MCF 10A (cell line): ENCODE measurements at regions of chr12 and their contacts with region 1.

Region 1: GRCh38 chr12:4037747-4038312 is 164.6 kb upstream of the PARP11 start:
- DNase-seq: peak; percentile 69
- H3K4me3 Mint-ChIP-seq: no peak overlapping the region
- H3K27ac Mint-ChIP-seq: no peak overlapping the region
- H3K4me1 Mint-ChIP-seq: peaks cover 22% of the 10 kb centered on the region
- H3K27me3 Mint-ChIP-seq: peaks cover 4% of the 10 kb centered on the region
- CTCF ChIP-seq: peak; percentile 71

Region 2: DNA sequence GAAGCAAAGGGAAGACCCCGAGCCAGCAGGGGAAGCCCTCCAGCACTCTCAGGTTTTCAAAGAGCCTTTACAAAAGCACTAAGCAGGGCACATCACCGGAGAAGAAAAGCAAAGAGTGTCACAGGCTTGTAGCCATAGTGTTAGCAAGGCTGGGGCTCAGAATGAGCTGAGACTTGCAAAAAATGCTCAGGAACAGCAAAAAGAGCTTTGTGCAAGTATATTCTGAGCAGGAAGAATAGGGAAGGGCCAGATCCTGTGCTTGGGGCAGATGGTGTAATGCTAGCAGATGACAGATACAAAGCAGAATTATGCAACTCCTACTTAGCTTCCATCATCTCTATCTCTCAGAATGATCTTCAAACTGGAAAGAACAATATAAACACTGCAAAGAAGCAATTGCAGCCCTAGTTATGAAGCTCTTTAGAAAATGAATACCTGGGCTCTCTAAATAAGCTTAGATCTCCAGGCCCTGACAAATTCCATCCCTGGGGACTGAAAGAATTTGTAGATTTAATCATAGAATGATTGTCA is 141.0 kb before region 1 on chr12:
- CTCF ChIA-PET with region 1: interaction called, 31 read pairs
- POLR2A ChIA-PET with region 1: interaction called, 9 read pairs
- intact Hi-C with region 1: no loop called
- DNase-seq: no peak
- H3K4me3 Mint-ChIP-seq: no peak overlapping the region
- H3K27ac Mint-ChIP-seq: no peak overlapping the region
- H3K4me1 Mint-ChIP-seq: peaks cover 8% of the 10 kb centered on the region
- H3K27me3 Mint-ChIP-seq: peaks cover 13% of the 10 kb centered on the region
- CTCF ChIP-seq: no peak

Region 3: DNA sequence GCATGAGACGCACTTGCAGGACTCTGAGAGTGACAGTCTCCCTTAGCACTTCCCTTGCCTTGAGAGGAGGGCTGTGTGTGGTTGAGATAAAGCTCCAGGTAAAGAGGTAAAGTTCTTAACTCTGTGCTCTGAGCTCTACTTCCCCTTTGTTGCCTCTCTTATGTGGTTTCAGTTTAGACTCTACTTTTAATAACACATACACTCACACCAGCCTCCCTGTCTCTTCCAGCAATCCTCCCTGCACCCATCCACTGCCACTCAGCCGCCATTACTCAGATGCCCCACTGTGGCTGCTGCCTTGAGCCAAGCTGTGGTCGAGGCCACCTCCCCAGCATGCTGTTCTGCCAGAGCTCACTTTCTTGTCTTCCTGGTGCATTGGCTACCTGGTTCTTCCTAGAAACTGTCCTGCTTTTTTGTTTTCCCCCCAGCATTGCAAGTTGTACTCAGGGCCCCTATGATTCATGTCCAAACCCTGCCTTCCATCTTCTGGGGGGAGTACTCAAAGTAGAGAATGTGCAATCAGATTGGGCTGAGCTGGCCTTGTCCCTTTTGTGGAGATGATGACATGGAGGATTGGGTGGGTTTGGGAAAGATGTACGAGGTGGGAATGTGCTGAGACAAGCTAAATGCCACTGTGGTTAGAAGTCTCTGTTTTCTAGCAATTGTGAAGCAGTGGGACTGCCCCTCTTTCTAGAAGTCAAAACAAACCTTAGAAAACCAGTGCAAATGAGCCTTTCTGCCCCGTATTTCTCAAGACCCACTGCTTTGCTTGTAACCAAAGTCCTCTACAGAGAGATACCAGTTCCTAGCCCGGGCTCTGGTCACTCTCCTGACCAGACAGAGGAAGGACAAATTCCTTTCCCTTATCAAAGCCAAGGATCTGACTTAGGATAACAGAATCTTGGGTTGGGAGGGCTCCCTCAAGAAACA is 49.0 kb before region 1 on chr12:
- CTCF ChIA-PET with region 1: interaction called, 403 read pairs
- POLR2A ChIA-PET with region 1: interaction called, 4 read pairs
- intact Hi-C with region 1: no loop called
- DNase-seq: no peak
- H3K4me3 Mint-ChIP-seq: no peak overlapping the region
- H3K27ac Mint-ChIP-seq: no peak overlapping the region
- H3K4me1 Mint-ChIP-seq: no peaks in the 10 kb centered on the region
- H3K27me3 Mint-ChIP-seq: peaks cover 34% of the 10 kb centered on the region
- CTCF ChIP-seq: no peak

Region 4: DNA sequence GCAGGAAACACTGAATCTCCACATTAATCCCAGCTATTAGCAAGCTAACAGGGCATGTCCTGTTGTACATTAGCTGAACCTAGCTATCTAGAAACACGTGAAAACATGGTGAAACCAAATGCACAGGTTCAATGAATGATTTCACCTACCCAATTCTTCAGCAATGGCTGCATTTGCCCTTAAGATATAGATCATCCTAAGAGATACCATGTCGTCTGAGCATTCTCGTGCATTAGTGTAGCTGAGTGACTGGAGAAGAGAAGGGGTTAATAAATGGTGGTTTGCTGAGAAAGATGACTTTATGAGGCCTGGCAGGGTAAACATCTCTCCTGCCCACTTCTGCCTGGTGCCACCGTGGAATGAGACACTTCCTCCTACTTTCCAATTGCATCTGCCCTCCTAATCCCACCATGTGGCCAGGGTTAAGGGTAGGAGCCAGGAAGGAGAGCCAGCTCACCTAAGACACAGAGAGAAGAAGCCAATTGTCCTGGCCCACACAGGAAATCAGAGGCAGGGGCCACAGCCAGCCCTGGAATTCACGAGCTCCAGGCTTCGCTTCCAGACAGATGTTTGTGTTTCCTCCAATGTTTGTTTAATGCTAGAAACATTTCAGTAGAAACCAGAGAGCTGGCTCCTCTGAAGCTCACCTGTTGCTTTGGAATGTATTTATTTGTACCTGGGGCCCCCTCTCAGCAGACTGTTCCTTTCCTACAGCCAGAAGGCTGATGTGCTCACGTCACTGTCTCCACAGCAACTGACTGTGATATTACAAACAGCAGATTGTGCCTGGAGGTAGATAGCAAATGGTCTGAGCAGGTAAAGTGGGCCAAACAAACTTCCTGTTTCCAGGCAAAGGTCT is 38.6 kb before region 1 on chr12:
- CTCF ChIA-PET with region 1: interaction called, 403 read pairs
- POLR2A ChIA-PET with region 1: interaction called, 6 read pairs
- intact Hi-C with region 1: loop called (anchors 1 kb)
- DNase-seq: peak; percentile 78
- H3K4me3 Mint-ChIP-seq: no peak overlapping the region
- H3K27ac Mint-ChIP-seq: peak overlapping the region; percentile 86
- H3K4me1 Mint-ChIP-seq: peaks cover 12% of the 10 kb centered on the region
- H3K27me3 Mint-ChIP-seq: peaks cover 8% of the 10 kb centered on the region
- CTCF ChIP-seq: no peak

Region 5: DNA sequence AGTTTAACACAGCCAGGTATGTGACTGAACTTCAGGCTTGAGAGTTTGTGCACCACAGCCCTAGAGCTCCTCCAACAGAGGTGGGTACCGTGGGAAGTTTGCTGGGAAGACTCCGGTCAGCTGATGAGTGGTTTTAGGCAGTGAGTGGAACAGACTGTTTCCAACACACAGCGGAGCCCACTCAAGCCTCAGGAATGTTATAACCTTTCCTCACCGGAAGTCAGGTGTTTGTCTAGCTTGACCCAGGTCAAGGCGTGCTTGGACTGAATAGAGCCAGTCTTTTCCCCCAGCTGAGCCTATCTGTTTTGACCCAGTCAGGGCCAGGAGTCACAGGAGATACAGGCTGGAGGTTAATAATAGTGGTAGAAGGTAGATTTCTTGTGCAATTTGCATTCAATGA is 26.2 kb before region 1 on chr12:
- CTCF ChIA-PET with region 1: interaction called, 43 read pairs
- POLR2A ChIA-PET with region 1: interaction called, 16 read pairs
- intact Hi-C with region 1: no loop called
- DNase-seq: peak; percentile 83
- H3K4me3 Mint-ChIP-seq: no peak overlapping the region
- H3K27ac Mint-ChIP-seq: peak overlapping the region; percentile 51
- H3K4me1 Mint-ChIP-seq: peaks cover 16% of the 10 kb centered on the region
- H3K27me3 Mint-ChIP-seq: no peaks in the 10 kb centered on the region
- CTCF ChIP-seq: no peak

Region 6: DNA sequence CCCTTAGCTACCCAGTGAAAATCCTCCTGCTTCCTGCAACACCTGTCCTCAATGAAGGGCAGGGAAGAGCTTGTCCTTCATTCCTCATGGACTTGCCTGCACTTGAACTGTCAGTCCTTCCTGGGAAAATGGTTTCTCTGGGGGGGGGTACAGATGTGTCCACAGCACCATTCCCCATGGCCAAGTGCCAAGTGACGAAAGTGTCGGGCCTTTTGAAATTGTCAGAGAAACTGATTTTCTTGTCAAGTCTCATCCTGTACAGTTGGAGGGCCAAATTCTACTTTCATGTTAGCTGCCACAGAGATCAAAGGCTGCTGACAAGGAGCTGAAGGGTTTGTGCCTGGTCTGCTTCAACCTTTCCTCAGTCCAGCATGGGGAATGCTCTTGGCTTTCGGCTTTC is 14.9 kb after region 1 on chr12:
- CTCF ChIA-PET with region 1: interaction called, 22 read pairs
- POLR2A ChIA-PET with region 1: no interaction called
- intact Hi-C with region 1: no loop called
- DNase-seq: peak; percentile 57
- H3K4me3 Mint-ChIP-seq: no peak overlapping the region
- H3K27ac Mint-ChIP-seq: no peak overlapping the region
- H3K4me1 Mint-ChIP-seq: no peaks in the 10 kb centered on the region
- H3K27me3 Mint-ChIP-seq: peaks cover 55% of the 10 kb centered on the region
- CTCF ChIP-seq: no peak

Region 7: GRCh38 chr12:4663971-4664505 is 626.2 kb after region 1 on chr12:
- CTCF ChIA-PET with region 1: no interaction called
- POLR2A ChIA-PET with region 1: no interaction called
- intact Hi-C with region 1: no loop called
- DNase-seq: peak; percentile 43
- H3K4me3 Mint-ChIP-seq: no peak overlapping the region
- H3K27ac Mint-ChIP-seq: peak overlapping the region; percentile 2
- H3K4me1 Mint-ChIP-seq: peaks cover 11% of the 10 kb centered on the region
- H3K27me3 Mint-ChIP-seq: no peaks in the 10 kb centered on the region
- CTCF ChIP-seq: no peak